CD4-positive, alpha-beta T cell (primary cell): ENCODE measurements at regions of chr12 and their contacts with region 1.

Region 1: DNA sequence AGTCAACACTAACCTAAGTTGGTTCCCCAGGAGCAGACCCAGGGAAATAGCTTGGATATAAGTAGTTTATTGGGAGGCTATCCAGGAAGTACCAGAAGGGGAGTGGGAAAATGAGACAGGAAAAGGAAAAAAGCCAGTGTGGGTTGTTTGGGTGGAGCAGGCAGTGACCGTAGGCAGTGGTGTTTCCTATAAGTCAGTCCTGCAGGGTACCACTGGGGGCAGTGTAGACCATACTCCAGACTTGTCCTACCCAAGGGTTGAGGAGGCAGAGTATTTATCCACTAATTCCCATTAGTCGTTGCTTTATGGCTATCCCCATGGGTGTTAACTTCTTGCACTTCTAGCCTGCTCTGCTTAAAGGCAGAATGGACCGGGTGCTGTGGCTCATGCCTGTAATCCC is 6.4 kb upstream of the CCDC60 start:
- DNase-seq: no peak
- ATAC-seq: no peak
- H3K4me3 ChIP-seq: no peak overlapping the region
- H3K4me3 Mint-ChIP-seq: no peak overlapping the region
- H3K27ac ChIP-seq: no peak overlapping the region
- H3K27ac Mint-ChIP-seq: no peak overlapping the region
- H3K4me1 ChIP-seq: no peaks in the 10 kb centered on the region
- H3K4me1 Mint-ChIP-seq: no peaks in the 10 kb centered on the region
- H3K27me3 ChIP-seq: peaks cover 0 to 2% of the 10 kb centered on the region in 2 experiments
- H3K27me3 Mint-ChIP-seq: peaks cover 11% of the 10 kb centered on the region
- CTCF ChIP-seq: no peak

Region 2: GRCh38 chr12:119381471-119382235 is 53.5 kb after region 1 on chr12:
- CTCF ChIA-PET with region 1: no interaction called
- POLR2A ChIA-PET with region 1: no interaction called
- intact Hi-C with region 1: loop called in 1 of 2 experiments (anchors 2 kb)
- DNase-seq: no peak
- ATAC-seq: no peak
- H3K4me3 ChIP-seq: no peak overlapping the region
- H3K4me3 Mint-ChIP-seq: no peak overlapping the region
- H3K27ac ChIP-seq: no peak overlapping the region
- H3K27ac Mint-ChIP-seq: no peak overlapping the region
- H3K4me1 ChIP-seq: no peaks in the 10 kb centered on the region
- H3K4me1 Mint-ChIP-seq: no peaks in the 10 kb centered on the region
- H3K27me3 ChIP-seq: no peaks in the 10 kb centered on the region
- H3K27me3 Mint-ChIP-seq: peaks cover 3% of the 10 kb centered on the region
- CTCF ChIP-seq: no peak

Region 3: DNA sequence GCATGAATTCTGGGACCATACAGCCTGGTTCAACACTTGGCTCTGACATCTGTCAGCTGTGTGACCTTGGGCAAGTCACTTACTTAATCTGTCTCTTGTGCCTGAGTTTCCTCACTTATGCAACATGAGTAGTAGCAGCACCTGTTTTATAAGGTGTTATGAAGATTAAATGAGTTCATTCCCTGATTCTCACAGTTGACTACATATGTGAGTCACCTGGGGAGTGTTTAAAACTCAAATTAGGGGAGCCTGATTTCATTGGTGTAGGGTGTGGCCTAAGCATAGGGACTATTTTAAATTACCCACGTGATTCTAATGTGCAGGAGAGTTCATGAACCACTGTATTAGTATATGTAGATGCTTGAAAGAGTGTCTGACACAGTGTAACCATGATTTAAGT is 228.7 kb after region 1 on chr12:
- CTCF ChIA-PET with region 1: no interaction called
- POLR2A ChIA-PET with region 1: no interaction called
- intact Hi-C with region 1: no loop called
- DNase-seq: no peak
- ATAC-seq: no peak
- H3K4me3 ChIP-seq: no peak overlapping the region
- H3K4me3 Mint-ChIP-seq: no peak overlapping the region
- H3K27ac ChIP-seq: no peak overlapping the region
- H3K27ac Mint-ChIP-seq: no peak overlapping the region
- H3K4me1 ChIP-seq: no peaks in the 10 kb centered on the region
- H3K4me1 Mint-ChIP-seq: no peaks in the 10 kb centered on the region
- H3K27me3 ChIP-seq: peaks cover 3 to 4% of the 10 kb centered on the region in 2 experiments
- H3K27me3 Mint-ChIP-seq: peaks cover 31% of the 10 kb centered on the region
- CTCF ChIP-seq: no peak